ENCODE measurements at regions of chr15 and their contacts with region 1.

Region 1: GRCh38 chr15:83066734-83067637 is at the start of gene BTBD1:
- DNase-seq: peak; percentile 89 to 92 (median 90)
- H3K4me3 ChIP-seq: peak within 1 kb of the TSS; percentile 84
- H3K27ac ChIP-seq: peak within 1 kb of the TSS; percentile 77 to 84
- H3K4me1 ChIP-seq: peaks cover 10% of the 10 kb centered on the region
- H3K27me3 ChIP-seq: no peaks in the 10 kb centered on the region
- CTCF ChIP-seq: peak in 1 of 3 donors; percentile 8
- EP300 ChIP-seq: no peak
- POLR2A ChIP-seq: peak; percentile 86
- total RNA-seq, gene BTBD1: 39.2 to 85.5 (median 44.4) TPM

Region 2: GRCh38 chr15:83011271-83012075 is 55.5 kb before region 1 on chr15 and contains the start of gene C15orf40:
- intact Hi-C with region 1: loop called in 1 of 4 experiments (anchors 10 kb)
- DNase-seq: peak; percentile 85 to 92 (median 89)
- H3K4me3 ChIP-seq: peak within 1 kb of the TSS; percentile 99
- H3K27ac ChIP-seq: peak within 1 kb of the TSS; percentile 28 to 71
- H3K4me1 ChIP-seq: peaks cover 11% of the 10 kb centered on the region
- H3K27me3 ChIP-seq: no peaks in the 10 kb centered on the region
- CTCF ChIP-seq: peak; percentile 32 to 71 (median 68)
- EP300 ChIP-seq: no peak
- POLR2A ChIP-seq: peak; percentile 67
- total RNA-seq, gene C15orf40: 15.0 to 27.4 (median 18.0) TPM

Region 3: DNA sequence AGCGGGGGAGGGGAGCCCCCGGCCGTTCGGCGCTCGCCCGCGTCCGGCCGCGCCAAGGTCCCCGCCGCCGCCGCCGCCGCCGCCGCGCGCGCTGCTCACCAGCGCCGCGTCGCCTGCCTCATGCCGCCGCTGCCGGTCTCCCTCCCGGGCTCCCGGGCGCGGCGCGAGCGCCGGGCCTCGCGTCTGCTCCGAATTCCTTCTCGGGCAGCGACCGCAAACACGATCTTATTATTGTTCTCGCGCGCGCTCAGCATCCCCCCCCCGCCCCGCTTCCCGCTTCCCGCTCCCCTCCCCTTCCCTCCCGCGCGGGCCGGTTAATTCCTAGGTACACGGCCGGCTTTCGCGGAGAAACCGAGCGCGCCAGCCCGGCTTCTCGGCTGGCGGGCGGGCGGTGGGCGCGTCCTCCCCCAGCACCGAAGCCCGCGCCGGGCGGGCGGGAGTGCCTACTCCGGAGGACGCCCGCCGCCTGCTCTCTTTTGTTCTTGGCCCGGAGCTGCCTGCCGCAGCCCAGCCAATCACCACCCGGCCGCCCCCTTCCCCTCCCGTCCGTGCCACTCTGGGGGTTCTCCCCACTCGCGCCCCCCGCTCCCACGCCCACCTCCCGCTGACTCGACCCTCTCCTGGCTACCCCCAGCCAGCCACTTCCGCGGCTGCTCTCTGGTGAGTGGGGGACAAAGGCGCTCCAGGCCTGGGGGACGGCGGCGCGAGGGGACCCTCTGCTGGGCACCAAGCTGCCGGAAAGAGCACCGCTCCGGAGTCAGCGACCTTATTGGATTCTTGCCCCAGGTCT is 140.8 kb after region 1 on chr15 and contains the start of gene HDGFL3:
- intact Hi-C with region 1: loop called in 2 of 4 experiments (anchors 2 to 5 kb)
- DNase-seq: peak; percentile 69 to 86 (median 79)
- H3K4me3 ChIP-seq: peak within 1 kb of the TSS; percentile 96
- H3K27ac ChIP-seq: peak within 1 kb of the TSS; percentile 88 to 93
- H3K4me1 ChIP-seq: no peaks in the 10 kb centered on the region
- H3K27me3 ChIP-seq: no peaks in the 10 kb centered on the region
- CTCF ChIP-seq: no peak
- EP300 ChIP-seq: no peak
- POLR2A ChIP-seq: no peak
- total RNA-seq, gene HDGFL3: 26.0 to 67.6 (median 52.6) TPM

Measured in ovary (tissue), 10 donors.